HEK293T (cell line): ENCODE measurements at regions of chr11 and their contacts with region 1.

Region 1: DNA sequence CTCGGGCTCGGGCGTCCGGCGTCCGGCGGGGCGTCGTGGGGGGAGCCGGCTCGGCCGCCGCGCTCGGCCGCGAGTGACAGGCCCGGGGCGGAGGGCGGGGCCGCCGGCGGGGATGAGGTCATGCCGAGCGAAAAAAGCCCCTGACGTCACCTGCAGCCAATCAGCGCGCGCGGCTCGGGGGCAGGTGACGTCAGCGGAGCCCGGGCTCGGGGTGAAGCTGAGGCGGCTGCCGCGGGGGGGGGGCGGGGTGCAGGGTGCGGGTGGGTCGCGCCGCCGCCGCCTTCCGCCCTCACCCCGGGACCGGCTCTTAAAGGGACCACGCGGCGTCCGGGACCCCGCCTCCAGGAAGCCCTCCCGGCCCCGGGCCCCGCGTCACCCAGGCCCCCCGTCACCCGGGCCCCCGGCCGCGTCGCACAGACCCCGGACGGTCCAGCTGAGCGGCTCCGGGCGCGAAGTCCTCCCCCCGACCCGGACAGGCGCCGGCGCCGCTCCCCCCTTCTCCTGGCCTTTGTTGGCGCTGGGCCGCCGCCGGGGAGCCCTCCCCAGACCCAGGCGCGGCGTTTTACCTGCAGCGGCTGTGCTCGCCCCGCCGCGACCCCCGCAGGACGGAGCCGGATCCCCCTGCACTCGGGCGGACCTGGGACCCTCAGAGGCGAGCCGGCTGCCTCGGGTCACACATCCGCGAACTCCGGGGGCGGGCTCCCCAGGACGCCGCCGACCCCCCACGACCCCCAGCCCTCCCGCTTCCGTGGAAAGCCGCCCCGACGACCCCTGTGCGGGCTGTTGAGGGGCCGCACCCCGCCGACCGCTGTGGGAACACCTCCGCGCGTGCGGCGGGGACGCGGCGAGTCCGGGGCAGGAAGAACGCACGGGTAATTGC is at the start of gene DUSP8:
- DNase-seq: peak; percentile 92

Region 2: GRCh38 chr11:1546536-1547400 is 25.7 kb before region 1 on chr11:
- CTCF ChIA-PET with region 1: interaction called, 45 read pairs
- POLR2A ChIA-PET with region 1: interaction called, 20 read pairs
- DNase-seq: peak; percentile 83